Heart left ventricle (tissue), 16 donors: ENCODE measurements at regions of chr20 and their contacts with region 1.

Region 1: DNA sequence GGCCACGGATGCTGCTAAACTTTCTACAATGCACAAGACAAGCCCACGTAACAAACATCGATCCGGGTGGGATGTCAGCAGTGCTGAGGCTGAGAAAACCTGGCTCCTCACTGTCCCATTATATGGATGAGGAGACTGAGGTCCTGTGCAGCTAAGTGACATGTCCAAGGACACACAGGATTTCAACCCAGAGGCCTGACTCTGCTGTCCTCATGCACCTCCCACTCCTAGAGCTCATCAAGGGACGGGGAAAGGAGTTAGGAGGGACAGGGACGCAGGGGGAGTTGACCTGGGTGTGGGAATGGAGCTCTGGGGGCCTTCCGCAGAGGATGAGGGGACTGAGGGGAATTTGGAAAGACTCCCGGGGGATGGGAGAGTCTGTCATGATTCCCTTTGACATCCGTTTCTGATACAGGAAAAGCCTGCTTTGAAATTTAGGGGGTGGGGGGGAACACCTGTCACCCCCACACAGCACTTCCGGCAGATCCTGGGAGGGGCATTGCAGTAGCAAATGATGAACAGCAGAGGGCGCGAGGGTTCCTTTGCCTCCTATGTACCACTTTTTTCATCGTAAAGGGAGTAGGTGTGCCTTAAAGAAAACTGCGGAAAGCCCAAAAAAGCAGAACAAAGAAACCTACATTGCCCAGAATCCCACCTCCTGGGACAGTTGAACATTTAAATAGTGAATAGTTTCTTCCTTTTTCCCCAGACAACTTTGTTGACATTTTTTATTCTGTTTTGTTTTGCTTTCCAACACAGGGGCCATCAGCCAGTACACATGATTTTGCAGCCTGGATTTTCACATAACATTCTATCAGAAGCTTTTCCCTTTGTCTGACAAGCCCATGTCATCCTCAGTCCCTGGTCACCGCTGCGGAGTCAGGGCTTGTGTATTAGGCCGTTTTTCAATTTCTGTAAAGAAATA is 48.6 kb downstream of the SLC2A10 start:
- DNase-seq: peak in 4 of 5 donors; percentile 10 to 40 (median 38)
- ATAC-seq: peak in 3 of 4 donors; percentile 42 to 54 (median 51)
- H3K4me3 ChIP-seq: no peak overlapping the region
- H3K27ac ChIP-seq: no peak overlapping the region
- H3K4me1 ChIP-seq: peaks cover 0 to under 1% (median 0%) of the 10 kb centered on the region in 12 donors
- H3K27me3 ChIP-seq: peaks cover 0 to 7% (median 0%) of the 10 kb centered on the region in 9 donors
- CTCF ChIP-seq: peak; percentile 82 to 95 (median 90)
- POLR2A ChIP-seq: no peak

Region 2: GRCh38 chr20:46689082-46689754 is 68.8 kb before region 1 on chr20 and contains the start of gene TP53RK:
- intact Hi-C with region 1: no loop called
- DNase-seq: peak; percentile 98 to 99 (median 99)
- ATAC-seq: peak; percentile 97 to 99 (median 98)
- H3K4me3 ChIP-seq: peak within 1 kb of the TSS; percentile 63 to 92 (median 76)
- H3K27ac ChIP-seq: peak within 1 kb of the TSS; percentile 75 to 98 (median 92)
- H3K4me1 ChIP-seq: peaks cover 0 to 33% (median 21%) of the 10 kb centered on the region in 12 donors
- H3K27me3 ChIP-seq: no peaks in the 10 kb centered on the region
- CTCF ChIP-seq: peak in 9 of 12 donors; percentile 10 to 56 (median 39)
- POLR2A ChIP-seq: peak in 1 of 2 donors; percentile 87
- total RNA-seq, gene TP53RK: 5.1 to 10.8 (median 7.9) TPM

Region 3: GRCh38 chr20:46835418-46835817 is 77.4 kb after region 1 on chr20:
- intact Hi-C with region 1: loop called in 1 of 10 experiments (anchors 10 kb)
- DNase-seq: no peak
- ATAC-seq: no peak
- H3K4me3 ChIP-seq: no peak overlapping the region
- H3K27ac ChIP-seq: no peak overlapping the region
- H3K4me1 ChIP-seq: no peaks in the 10 kb centered on the region
- H3K27me3 ChIP-seq: peaks cover 0 to 19% (median 0%) of the 10 kb centered on the region in 9 donors
- CTCF ChIP-seq: no peak
- POLR2A ChIP-seq: no peak

Region 4: DNA sequence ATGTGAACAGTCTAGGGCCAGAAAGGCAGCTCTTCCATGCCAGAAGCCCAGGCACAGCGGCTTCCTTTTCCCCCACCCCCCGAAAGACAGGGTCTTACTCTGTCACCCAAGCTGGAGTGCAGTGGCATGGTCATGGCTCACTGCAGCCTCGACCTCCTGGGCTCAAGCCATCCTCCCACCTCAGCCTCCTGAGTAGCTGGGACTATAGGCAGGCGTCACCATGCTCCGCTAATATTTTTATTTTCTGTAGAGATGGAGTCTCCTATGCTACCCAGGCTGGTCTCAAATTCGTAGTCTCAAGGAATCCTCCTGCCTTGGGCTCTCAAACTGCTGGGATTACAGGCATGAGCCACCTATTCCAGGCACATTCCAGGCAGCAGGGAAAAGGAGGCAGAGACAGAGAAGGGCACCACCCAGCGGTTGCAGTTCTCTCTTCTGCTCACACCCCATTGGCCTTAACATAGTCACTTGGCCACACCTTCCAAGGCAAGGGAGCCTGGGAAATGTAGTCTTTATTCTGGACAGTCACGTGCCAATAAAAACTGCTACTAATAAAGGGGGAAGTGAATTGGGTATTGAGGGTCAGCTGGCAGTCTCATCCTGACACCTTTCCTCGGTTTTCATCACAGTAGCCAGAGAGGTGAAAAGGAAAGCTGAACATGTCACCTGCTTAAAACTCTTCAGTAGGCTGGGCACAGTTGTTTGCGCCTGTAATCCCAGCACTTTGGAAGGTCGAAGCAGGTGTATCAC is 392.6 kb after region 1 on chr20:
- intact Hi-C with region 1: loop called (anchors 1 to 5 kb)
- DNase-seq: peak in 4 of 5 donors; percentile 45 to 62 (median 57)
- ATAC-seq: peak; percentile 87 to 95 (median 94)
- H3K4me3 ChIP-seq: no peak overlapping the region
- H3K27ac ChIP-seq: no peak overlapping the region
- H3K4me1 ChIP-seq: peaks cover 0 to 6% (median 0%) of the 10 kb centered on the region in 12 donors
- H3K27me3 ChIP-seq: peaks cover 0 to 15% (median 0%) of the 10 kb centered on the region in 9 donors
- CTCF ChIP-seq: peak; percentile 43 to 73 (median 52)
- POLR2A ChIP-seq: no peak

Region 5: GRCh38 chr20:47196091-47197081 is 438.4 kb after region 1 on chr20:
- intact Hi-C with region 1: loop called in 1 of 10 experiments (anchors 5 kb)
- DNase-seq: peak; percentile 60 to 84 (median 66)
- ATAC-seq: peak; percentile 45 to 86 (median 83)
- H3K4me3 ChIP-seq: peak overlapping the region in 1 of 12 donors; percentile 5
- H3K27ac ChIP-seq: peak overlapping the region in 1 of 12 donors; percentile 17
- H3K4me1 ChIP-seq: peaks cover 0 to 19% (median 7%) of the 10 kb centered on the region in 12 donors
- H3K27me3 ChIP-seq: no peaks in the 10 kb centered on the region
- CTCF ChIP-seq: peak; percentile 91 to 98 (median 95)
- POLR2A ChIP-seq: no peak

Region 6: GRCh38 chr20:47258745-47259695 is 501.0 kb after region 1 on chr20:
- intact Hi-C with region 1: loop called in 3 of 10 experiments (anchors 10 kb)
- DNase-seq: peak in 4 of 5 donors; percentile 62 to 83 (median 70)
- ATAC-seq: peak; percentile 68 to 84 (median 75)
- H3K4me3 ChIP-seq: no peak overlapping the region
- H3K27ac ChIP-seq: peak overlapping the region; percentile 29 to 88 (median 81)
- H3K4me1 ChIP-seq: peaks cover 0 to 60% (median 36%) of the 10 kb centered on the region in 12 donors
- H3K27me3 ChIP-seq: no peaks in the 10 kb centered on the region
- CTCF ChIP-seq: no peak
- POLR2A ChIP-seq: no peak

Region 7: GRCh38 chr20:47392015-47392720 is 634.2 kb after region 1 on chr20:
- intact Hi-C with region 1: loop called in 3 of 10 experiments (anchors 10 kb)
- DNase-seq: peak in 1 of 5 donors; percentile 62
- ATAC-seq: peak in 3 of 4 donors; percentile 64 to 88 (median 86)
- H3K4me3 ChIP-seq: no peak overlapping the region
- H3K27ac ChIP-seq: peak overlapping the region in 3 of 12 donors; percentile 27 to 65 (median 62)
- H3K4me1 ChIP-seq: peaks cover 0 to 13% (median 0%) of the 10 kb centered on the region in 12 donors
- H3K27me3 ChIP-seq: no peaks in the 10 kb centered on the region
- CTCF ChIP-seq: no peak
- POLR2A ChIP-seq: no peak

Region 8: GRCh38 chr20:47638851-47639250 is 880.8 kb after region 1 on chr20:
- intact Hi-C with region 1: loop called in 1 of 10 experiments (anchors 10 kb)
- DNase-seq: no peak
- ATAC-seq: no peak
- H3K4me3 ChIP-seq: no peak overlapping the region
- H3K27ac ChIP-seq: no peak overlapping the region
- H3K4me1 ChIP-seq: no peaks in the 10 kb centered on the region
- H3K27me3 ChIP-seq: no peaks in the 10 kb centered on the region
- CTCF ChIP-seq: no peak
- POLR2A ChIP-seq: no peak